ENCODE measurements at regions of chr9 and their contacts with region 1.

Region 1: GRCh38 chr9:129962889-129963703 is 79.9 kb downstream of the FNBP1 start:
- DNase-seq: peak; percentile 88
- ATAC-seq: peak; percentile 96
- H3K4me3 ChIP-seq: peak overlapping the region; percentile 43 to 81 (median 58)
- H3K4me3 Mint-ChIP-seq: peak overlapping the region; percentile 83
- H3K27ac ChIP-seq: peak overlapping the region; percentile 93 to 96
- H3K27ac Mint-ChIP-seq: peak overlapping the region; percentile 93
- H3K4me1 ChIP-seq: peaks cover 30 to 35% of the 10 kb centered on the region in 2 donors
- H3K4me1 Mint-ChIP-seq: peaks cover 61% of the 10 kb centered on the region
- H3K27me3 ChIP-seq: no peaks in the 10 kb centered on the region
- H3K27me3 Mint-ChIP-seq: no peaks in the 10 kb centered on the region
- CTCF ChIP-seq: no peak

Region 2: DNA sequence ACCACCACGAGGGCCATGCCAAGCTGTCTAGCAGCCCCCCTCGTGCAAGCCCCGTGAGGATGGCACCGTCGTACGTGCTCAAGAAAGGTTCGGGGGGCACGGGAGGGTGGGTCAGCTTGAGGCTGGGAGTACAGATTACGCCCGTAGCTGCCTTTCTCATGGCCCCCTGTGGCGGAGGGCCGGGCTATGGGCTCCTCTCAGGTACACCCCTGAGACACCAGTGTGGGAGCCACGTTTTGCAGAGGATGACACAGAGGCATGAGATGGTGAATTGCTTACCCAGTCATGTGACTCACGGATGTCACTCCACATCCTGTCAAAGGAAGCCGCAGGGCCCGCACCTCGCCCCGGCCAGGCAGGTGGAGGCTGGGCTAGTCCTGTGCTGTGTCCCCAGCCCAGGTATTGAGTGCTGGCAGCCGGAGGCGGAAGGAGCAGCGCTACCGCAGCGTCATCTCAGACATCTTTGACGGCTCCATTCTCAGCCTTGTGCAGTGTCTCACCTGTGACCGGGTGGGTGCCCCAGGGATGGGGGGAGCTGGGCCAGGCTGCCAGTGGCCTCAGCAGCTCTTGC is 94.1 kb before region 1 on chr9:
- CTCF ChIA-PET with region 1: no interaction called
- POLR2A ChIA-PET with region 1: no interaction called
- intact Hi-C with region 1: no loop called
- DNase-seq: peak; percentile 54
- ATAC-seq: peak; percentile 41
- H3K4me3 ChIP-seq: no peak overlapping the region
- H3K4me3 Mint-ChIP-seq: no peak overlapping the region
- H3K27ac ChIP-seq: peak overlapping the region in 1 of 2 donors; percentile 36
- H3K27ac Mint-ChIP-seq: peak overlapping the region; percentile 50
- H3K4me1 ChIP-seq: peaks cover 8 to 12% of the 10 kb centered on the region in 2 donors
- H3K4me1 Mint-ChIP-seq: peaks cover 11% of the 10 kb centered on the region
- H3K27me3 ChIP-seq: no peaks in the 10 kb centered on the region
- H3K27me3 Mint-ChIP-seq: no peaks in the 10 kb centered on the region
- CTCF ChIP-seq: no peak

Region 3: GRCh38 chr9:130053504-130054324 is 90.6 kb after region 1 on chr9 and contains the start of gene GPR107:
- CTCF ChIA-PET with region 1: no interaction called
- POLR2A ChIA-PET with region 1: interaction called, 8 read pairs
- intact Hi-C with region 1: loop called (anchors 1 kb)
- DNase-seq: peak; percentile 87
- ATAC-seq: peak; percentile 97
- H3K4me3 ChIP-seq: peak within 1 kb of the TSS; percentile 78 to 96 (median 88)
- H3K4me3 Mint-ChIP-seq: peak within 1 kb of the TSS; percentile 91
- H3K27ac ChIP-seq: peak within 1 kb of the TSS; percentile 64 to 95
- H3K27ac Mint-ChIP-seq: peak within 1 kb of the TSS; percentile 88
- H3K4me1 ChIP-seq: peaks cover 14 to 20% of the 10 kb centered on the region in 2 donors
- H3K4me1 Mint-ChIP-seq: peaks cover 30% of the 10 kb centered on the region
- H3K27me3 ChIP-seq: no peaks in the 10 kb centered on the region
- H3K27me3 Mint-ChIP-seq: no peaks in the 10 kb centered on the region
- CTCF ChIP-seq: no peak
- total RNA-seq, gene GPR107: 26.8 and 28.1 TPM in 2 replicates

Measured in B cell (primary cell).